ENCODE measurements at regions of chr11 and their contacts with region 1.

Region 1: GRCh38 chr11:61049859-61050258 is 52.4 kb upstream of the CD5 start:
- DNase-seq: peak; percentile 14
- H3K4me3 Mint-ChIP-seq: no peak overlapping the region
- H3K27ac Mint-ChIP-seq: peak overlapping the region; percentile 53
- H3K4me1 Mint-ChIP-seq: peaks cover 76% of the 10 kb centered on the region
- H3K27me3 Mint-ChIP-seq: no peaks in the 10 kb centered on the region

Region 2: DNA sequence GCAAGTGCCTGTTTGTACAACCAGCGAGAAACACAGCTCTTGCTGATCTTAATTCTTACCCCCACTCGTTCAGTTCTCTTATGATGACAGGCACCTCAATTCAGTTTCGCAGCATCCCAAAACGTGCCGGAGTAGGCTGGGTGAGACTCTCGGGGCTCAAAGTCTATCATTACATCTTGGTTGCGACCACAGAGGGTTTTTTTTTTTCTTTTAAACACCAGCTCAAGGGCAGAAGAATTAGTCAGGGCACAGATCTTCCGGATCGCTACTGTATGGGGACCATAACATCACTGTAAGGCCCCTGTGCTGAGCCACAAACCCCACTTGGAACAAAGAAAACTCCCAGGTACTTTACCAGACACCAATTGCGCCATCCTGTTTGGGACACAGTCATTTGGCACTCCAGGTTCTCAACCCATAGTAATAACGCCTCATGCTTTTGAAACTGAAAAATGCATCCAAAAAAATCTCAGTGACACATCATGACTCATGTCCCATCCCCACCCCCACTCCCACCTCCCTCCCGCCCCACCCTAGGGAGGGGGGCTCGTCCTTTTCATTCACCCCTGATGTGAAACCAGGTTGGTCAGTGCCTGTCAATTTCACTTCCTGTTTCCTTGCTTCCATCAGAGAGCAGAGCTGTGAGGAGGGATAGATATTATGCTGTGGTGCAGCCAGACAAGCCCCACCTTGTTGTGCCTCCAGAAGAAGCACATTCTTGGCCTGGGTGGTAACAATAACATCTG is 11.4 kb after region 1 on chr11:
- CTCF ChIA-PET with region 1: interaction called, 13 read pairs
- DNase-seq: peak; percentile 91
- H3K4me3 Mint-ChIP-seq: peak overlapping the region; percentile 80
- H3K27ac Mint-ChIP-seq: peak overlapping the region; percentile 97
- H3K4me1 Mint-ChIP-seq: peaks cover 83% of the 10 kb centered on the region
- H3K27me3 Mint-ChIP-seq: no peaks in the 10 kb centered on the region

Measured in activated naive CD4-positive, alpha-beta T cell treated with anti-CD3 and anti-CD28 coated beads, Interleukin-2, amount 10 ng/mL, durations not matched to agents 7 days and 5 days (primary cell).